IMR-90 (cell line): ENCODE measurements at regions of chr13 and their contacts with region 1.

Region 1: DNA sequence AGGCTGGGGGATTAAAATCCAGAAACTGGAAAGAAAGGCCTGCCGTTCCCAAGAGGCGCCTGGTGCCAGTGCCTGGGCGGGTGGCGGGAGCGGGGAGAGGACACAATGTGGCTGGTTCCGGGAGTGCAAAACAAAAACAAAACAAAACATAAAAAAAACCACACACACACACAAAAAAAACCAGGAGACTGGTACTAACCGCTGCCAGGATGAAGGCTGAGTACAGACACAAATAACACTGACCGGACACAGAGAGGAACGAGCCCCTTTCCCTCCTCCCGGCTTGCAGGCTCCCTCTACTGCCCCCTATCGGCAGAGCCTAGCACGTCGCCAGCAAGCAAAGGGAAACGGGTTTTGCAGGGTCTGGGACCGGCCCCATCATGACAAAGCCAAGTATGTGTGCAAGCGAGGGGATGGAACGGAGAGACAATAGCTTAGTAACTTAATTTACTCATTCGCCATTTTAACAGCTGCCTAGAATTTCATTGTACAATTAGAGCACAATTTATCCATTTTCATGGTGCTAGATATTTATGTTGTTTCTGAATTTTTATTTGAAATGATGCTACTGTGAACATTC is 17.9 kb upstream of the ZDHHC20 start:
- DNase-seq: peak; percentile 74
- ATAC-seq: peak; percentile 85
- H3K4me3 ChIP-seq: peak overlapping the region; percentile 27
- H3K27ac ChIP-seq: no peak overlapping the region
- H3K4me1 ChIP-seq: no peaks in the 10 kb centered on the region
- H3K27me3 ChIP-seq: no peaks in the 10 kb centered on the region
- CTCF ChIP-seq: peak; percentile 83
- POLR2A ChIP-seq: no peak
- RAD21 ChIP-seq: peak; percentile 75

Region 2: GRCh38 chr13:20182231-20182846 is 1294.6 kb before region 1 on chr13:
- CTCF ChIA-PET with region 1: no interaction called
- POLR2A ChIA-PET with region 1: no interaction called
- dilution Hi-C with region 1: no loop called
- in situ Hi-C with region 1: loop called (anchors 25 kb)
- intact Hi-C with region 1: no loop called
- DNase-seq: peak; percentile 80
- ATAC-seq: peak; percentile 99
- H3K4me3 ChIP-seq: no peak overlapping the region
- H3K27ac ChIP-seq: no peak overlapping the region
- H3K4me1 ChIP-seq: no peaks in the 10 kb centered on the region
- H3K27me3 ChIP-seq: peaks cover 19% of the 10 kb centered on the region
- CTCF ChIP-seq: peak; percentile 79
- POLR2A ChIP-seq: no peak
- RAD21 ChIP-seq: peak; percentile 87

Region 3: GRCh38 chr13:20512042-20512683 is 964.8 kb before region 1 on chr13:
- CTCF ChIA-PET with region 1: no interaction called
- POLR2A ChIA-PET with region 1: no interaction called
- dilution Hi-C with region 1: no loop called
- in situ Hi-C with region 1: loop called (anchors 25 kb)
- intact Hi-C with region 1: no loop called
- DNase-seq: no peak
- ATAC-seq: no peak
- H3K4me3 ChIP-seq: no peak overlapping the region
- H3K27ac ChIP-seq: no peak overlapping the region
- H3K4me1 ChIP-seq: no peaks in the 10 kb centered on the region
- H3K27me3 ChIP-seq: no peaks in the 10 kb centered on the region
- CTCF ChIP-seq: no peak
- POLR2A ChIP-seq: no peak
- RAD21 ChIP-seq: no peak

Region 4: DNA sequence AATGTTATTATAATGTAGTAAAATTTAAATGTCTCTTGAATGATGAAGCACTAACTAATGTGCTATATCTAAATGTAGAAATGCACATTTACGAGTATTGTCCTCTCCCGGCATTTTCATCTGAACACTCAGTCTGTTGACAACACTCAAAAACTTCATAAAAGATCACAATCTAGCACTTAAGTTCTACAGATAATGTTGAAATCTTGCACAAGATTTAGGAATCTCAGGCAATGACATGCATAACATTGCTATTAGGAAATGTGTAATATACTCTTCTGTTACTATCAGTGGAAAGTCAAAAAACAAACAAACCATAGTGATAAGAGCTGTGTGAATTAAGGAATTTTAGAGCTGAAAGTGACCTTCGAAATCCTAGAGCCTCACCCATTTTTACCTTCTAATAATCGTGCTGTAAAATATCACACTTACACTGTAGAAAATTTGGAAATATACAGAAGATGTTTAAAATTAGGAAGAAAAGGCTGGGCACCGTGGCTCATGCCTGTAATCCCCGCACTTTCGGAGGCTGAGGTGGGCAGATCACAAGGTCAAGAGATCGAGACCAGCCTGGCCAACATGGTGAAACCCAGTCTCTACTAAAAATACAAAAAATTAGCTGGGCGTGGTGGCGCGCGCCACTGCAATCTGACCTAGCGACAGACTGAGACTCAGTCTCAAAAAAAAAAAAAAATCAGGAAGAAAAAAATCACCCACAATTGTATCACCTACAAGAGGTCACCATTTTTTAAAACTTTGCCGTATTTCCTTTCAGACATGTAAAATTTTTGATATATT is 536.7 kb before region 1 on chr13:
- CTCF ChIA-PET with region 1: no interaction called
- POLR2A ChIA-PET with region 1: no interaction called
- dilution Hi-C with region 1: no loop called
- in situ Hi-C with region 1: loop called (anchors 10 kb)
- intact Hi-C with region 1: loop called (anchors 2 kb)
- DNase-seq: peak; percentile 83
- ATAC-seq: peak; percentile 18
- H3K4me3 ChIP-seq: no peak overlapping the region
- H3K27ac ChIP-seq: no peak overlapping the region; the same call in 1 of the 2 replicates
- H3K4me1 ChIP-seq: peaks cover 13% of the 10 kb centered on the region
- H3K27me3 ChIP-seq: peaks cover 4% of the 10 kb centered on the region; the same call in 1 of the 2 replicates
- CTCF ChIP-seq: no peak
- POLR2A ChIP-seq: no peak
- RAD21 ChIP-seq: no peak

Region 5: DNA sequence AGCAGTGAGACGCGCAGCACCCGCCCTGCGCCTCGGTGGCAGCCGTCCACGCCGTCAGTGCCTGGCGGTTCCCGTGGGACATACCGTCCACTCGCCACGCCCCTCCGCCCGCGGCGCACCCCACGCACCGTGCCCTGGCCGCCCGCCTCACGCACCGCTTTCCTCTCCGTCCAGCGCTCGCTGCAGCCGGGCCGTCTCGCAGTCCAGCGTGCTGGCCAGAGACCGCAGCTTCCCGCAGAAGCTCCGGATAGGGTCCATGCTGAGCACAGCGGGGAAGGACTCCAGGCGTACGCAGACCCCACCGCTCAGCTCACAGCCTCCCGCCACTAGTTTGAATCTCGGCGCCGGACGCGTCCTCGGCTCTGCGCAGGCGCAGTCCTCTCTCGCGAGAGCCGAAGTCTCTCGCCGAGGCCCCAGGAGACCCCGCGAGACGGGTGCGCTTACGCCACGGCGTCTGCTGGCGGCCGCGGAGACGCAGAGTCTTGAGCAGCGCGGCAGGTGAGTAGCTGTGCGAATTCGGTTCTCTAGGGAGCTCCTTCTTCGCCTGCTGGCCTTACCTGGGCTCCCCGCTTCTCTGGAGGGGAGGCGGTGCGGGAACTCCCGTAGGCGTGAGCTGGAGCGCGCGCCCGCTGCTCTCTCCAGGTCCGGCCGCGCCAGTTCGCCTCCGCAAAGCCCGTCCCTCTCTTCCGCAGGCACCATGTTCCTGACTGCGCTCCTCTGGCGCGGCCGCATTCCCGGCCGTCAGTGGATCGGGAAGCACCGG is 300.6 kb before region 1 on chr13 and contains the starts of genes MRPL57 and SKA3:
- CTCF ChIA-PET with region 1: interaction called, 3 read pairs
- POLR2A ChIA-PET with region 1: no interaction called
- dilution Hi-C with region 1: no loop called
- in situ Hi-C with region 1: loop called (anchors 10 kb)
- intact Hi-C with region 1: loop called (anchors 2 kb)
- DNase-seq: peak; percentile 91
- ATAC-seq: peak; percentile 91
- H3K4me3 ChIP-seq: peak within 1 kb of the TSS; percentile 87
- H3K27ac ChIP-seq: peak within 1 kb of the TSS; percentile 87
- H3K4me1 ChIP-seq: 0 out of 2 replicates have a peak, but pooled peaks cover 2% of the 10 kb centered on the region
- H3K27me3 ChIP-seq: no peaks in the 10 kb centered on the region
- CTCF ChIP-seq: no peak
- POLR2A ChIP-seq: peak; percentile 85
- RAD21 ChIP-seq: 0 out of 2 replicates have a peak, but pooled peaks have one; percentile 18
- total RNA-seq, gene MRPL57: 5.3 and 7.0 TPM in 2 replicates
- total RNA-seq, gene SKA3: 15.6 and 24.4 TPM in 2 replicates

Region 6: DNA sequence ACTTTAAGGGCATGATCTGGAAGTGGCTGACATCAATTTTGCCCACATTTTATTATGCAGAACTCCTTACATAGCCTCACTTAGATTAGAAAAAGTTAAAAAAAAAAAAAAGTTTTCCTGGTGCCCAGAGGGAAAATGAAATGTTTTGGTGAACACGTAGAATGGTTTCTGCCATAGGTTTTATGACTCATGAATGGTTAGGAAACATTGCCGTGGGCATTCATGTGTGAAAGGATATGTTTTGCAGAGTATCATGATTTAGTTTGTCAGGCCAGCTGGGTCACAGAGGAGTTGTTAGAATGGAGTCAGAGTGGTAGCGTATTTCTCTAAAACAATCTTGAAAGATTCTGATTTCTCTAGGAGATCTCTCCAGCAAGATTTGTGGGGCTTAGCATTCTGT is 166.8 kb before region 1 on chr13:
- CTCF ChIA-PET with region 1: no interaction called
- POLR2A ChIA-PET with region 1: no interaction called
- dilution Hi-C with region 1: no loop called
- in situ Hi-C with region 1: no loop called
- intact Hi-C with region 1: no loop called
- DNase-seq: no peak
- ATAC-seq: no peak
- H3K4me3 ChIP-seq: no peak overlapping the region
- H3K27ac ChIP-seq: no peak overlapping the region
- H3K4me1 ChIP-seq: no peaks in the 10 kb centered on the region
- H3K27me3 ChIP-seq: no peaks in the 10 kb centered on the region
- CTCF ChIP-seq: no peak
- POLR2A ChIP-seq: no peak
- RAD21 ChIP-seq: no peak

Region 7: GRCh38 chr13:22757530-22758120 is 1280.6 kb after region 1 on chr13:
- CTCF ChIA-PET with region 1: interaction called, 3 read pairs
- POLR2A ChIA-PET with region 1: no interaction called
- dilution Hi-C with region 1: no loop called
- in situ Hi-C with region 1: no loop called
- intact Hi-C with region 1: loop called (anchors 10 kb)
- DNase-seq: peak; percentile 7
- ATAC-seq: peak; percentile 57; the same call in 1 of the 2 replicates
- H3K4me3 ChIP-seq: no peak overlapping the region
- H3K27ac ChIP-seq: no peak overlapping the region
- H3K4me1 ChIP-seq: no peaks in the 10 kb centered on the region
- H3K27me3 ChIP-seq: no peaks in the 10 kb centered on the region
- CTCF ChIP-seq: peak; percentile 53
- POLR2A ChIP-seq: no peak
- RAD21 ChIP-seq: peak; percentile 62